IMR-90 (cell line): ENCODE measurements at regions of chr2 and their contacts with region 1.

Region 1: DNA sequence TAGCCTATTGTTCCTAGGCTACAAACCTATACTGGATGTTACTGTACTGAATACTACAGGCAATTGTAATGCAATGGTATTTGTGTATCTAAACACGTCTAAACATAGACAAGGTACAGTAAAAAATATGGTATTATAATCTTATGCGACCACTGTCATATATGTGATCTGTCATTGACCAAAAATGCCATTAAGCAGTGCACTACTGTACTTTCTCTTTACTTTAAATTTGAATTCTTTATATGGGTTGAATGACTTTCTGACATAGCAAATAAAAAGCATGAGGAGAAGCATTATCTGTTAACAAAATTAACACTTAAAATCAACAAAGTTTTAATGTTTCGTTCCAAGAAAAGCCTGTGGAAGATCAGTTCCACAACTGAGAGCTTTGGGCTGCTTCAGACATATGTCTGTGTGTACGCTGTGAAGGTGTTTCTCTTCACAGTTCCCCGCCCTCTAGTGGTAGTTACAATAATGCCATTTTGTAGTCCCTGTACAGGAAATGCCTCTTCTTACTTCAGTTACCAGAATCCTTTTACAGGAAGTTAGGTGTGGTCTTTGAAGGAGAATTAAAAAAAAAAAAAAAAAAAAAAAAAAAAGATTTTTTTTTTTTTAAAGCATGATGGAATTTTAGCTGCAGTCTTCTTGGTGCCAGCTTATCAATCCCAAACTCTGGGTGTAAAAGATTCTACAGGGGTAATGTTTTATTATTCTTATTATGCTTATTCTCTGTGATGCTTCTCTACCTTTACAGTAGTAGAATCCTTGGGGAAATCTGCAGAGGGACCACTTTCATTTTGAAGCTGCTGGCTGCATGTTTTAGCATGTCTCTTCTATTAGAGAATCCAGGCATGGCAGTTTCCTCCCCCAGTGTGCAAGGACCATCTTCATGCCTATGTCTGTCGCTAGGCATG is 54.5 kb downstream of the SCN2A start:
- DNase-seq: peak; percentile 87
- ATAC-seq: peak; percentile 100
- H3K4me3 ChIP-seq: peak overlapping the region; percentile 40
- H3K27ac ChIP-seq: no peak overlapping the region
- H3K4me1 ChIP-seq: no peaks in the 10 kb centered on the region
- H3K27me3 ChIP-seq: no peaks in the 10 kb centered on the region
- CTCF ChIP-seq: peak; percentile 82
- POLR2A ChIP-seq: no peak
- RAD21 ChIP-seq: peak; percentile 47

Region 2: DNA sequence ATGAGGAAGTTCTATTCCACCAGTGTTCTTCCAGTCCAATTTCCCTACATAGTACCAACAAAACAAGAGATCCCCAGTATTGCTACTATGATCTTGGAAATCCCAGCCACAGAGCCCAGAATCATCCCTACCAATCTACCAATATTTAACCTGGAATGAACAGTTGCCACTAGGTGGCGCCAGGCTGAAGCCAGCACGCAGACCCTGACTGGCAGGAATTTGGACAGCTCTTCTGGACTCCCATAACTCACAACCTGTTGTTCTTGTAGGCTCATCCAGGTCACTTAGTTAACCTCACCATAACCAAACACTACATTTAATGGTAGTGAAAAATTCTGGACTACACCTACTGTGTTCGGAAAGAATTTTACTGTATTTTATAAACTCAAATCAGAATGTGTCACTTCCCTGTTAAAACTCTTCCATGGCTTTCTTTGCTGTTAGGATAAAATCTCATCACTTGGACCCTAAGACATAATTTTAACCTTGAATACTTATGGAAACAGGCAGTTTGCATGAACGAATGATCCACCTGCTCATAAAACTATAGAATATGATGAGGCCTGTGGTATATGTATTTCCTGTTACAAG is 278.6 kb before region 1 on chr2:
- CTCF ChIA-PET with region 1: interaction called, 4 read pairs
- POLR2A ChIA-PET with region 1: no interaction called
- dilution Hi-C with region 1: no loop called
- in situ Hi-C with region 1: no loop called
- intact Hi-C with region 1: loop called (anchors 5 kb)
- DNase-seq: peak; percentile 59
- ATAC-seq: peak; percentile 82
- H3K4me3 ChIP-seq: no peak overlapping the region
- H3K27ac ChIP-seq: no peak overlapping the region
- H3K4me1 ChIP-seq: no peaks in the 10 kb centered on the region
- H3K27me3 ChIP-seq: peaks cover 3% of the 10 kb centered on the region; the same call in 1 of the 2 replicates
- CTCF ChIP-seq: peak; percentile 82
- POLR2A ChIP-seq: no peak
- RAD21 ChIP-seq: peak; percentile 61